ENCODE measurements at regions of chr6 and their contacts with region 1.

Region 1: DNA sequence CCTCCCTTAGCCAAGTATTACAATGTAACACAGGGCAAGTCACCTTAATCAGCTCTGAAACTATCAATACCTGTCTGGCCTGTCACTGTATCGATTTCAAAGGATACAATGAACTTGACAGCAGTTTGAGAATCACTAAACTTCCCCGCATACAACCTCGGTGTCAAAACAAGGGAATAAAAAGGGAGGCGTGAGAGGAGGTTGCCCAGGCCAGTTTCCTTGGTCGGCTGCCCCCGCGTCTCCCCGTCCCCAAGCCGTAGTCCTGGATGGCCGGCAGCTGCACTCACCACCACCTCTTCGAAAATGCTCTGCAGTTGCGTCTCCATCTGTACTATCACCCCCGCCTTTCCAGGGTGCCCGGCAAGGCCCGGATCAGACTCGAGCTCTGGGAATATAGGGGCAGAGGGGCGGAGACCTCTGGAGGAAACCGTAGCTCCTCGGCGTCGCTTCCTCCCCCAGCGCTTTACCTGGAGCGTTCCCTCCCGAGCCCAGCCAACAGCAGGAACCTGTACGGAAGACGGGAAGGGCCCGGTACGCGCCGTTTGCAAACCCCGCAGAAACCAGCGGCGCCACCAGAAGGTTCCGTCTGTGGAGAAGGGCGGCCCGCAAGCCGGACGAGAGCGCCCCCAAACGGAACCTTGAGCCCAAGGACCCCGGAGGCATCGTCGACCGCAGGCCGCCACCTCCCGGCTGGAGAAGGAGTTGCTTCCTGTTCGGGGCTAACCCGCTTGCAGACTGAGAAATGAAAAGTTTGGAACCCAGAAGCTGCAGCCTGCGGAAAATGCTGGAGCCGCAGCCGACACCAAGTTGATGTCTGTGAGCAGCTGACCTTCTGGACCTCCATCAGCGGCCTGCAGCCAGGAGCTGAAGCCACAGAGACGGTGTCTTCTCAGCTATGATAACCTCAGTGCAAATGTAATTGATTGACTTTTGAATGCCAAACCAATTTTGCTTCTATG is at the start of gene MED23:
- DNase-seq: peak; percentile 70
- H3K4me3 ChIP-seq: peak within 1 kb of the TSS; percentile 85
- CTCF ChIP-seq: peak; percentile 100

Region 2: DNA sequence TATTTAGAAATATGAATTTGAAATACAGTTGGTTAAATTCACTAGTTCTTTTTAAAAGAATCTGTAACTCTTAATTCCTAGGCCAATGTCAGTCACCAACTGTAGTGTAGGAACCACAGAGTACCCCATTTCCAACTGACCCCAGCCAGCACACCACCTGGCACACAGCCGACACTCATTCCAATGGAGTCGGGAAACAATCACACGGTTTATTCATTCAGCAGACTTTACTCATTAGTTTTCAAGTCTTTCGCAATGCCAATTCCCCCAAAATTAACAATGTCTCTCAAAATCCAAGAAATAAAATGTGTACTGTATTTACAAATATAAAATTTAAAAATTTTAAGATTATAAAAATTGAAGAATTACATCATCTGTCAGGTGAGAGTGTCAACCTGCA is 41.5 kb before region 1 on chr6:
- CTCF ChIA-PET with region 1: interaction called, 15 read pairs
- POLR2A ChIA-PET with region 1: no interaction called
- DNase-seq: no peak
- H3K4me3 ChIP-seq: no peak overlapping the region
- CTCF ChIP-seq: no peak

Region 3: GRCh38 chr6:131615275-131615674 is 12.7 kb before region 1 on chr6:
- CTCF ChIA-PET with region 1: interaction called, 52 read pairs
- POLR2A ChIA-PET with region 1: interaction called, 3 read pairs
- DNase-seq: no peak
- H3K4me3 ChIP-seq: no peak overlapping the region
- CTCF ChIP-seq: no peak

Region 4: DNA sequence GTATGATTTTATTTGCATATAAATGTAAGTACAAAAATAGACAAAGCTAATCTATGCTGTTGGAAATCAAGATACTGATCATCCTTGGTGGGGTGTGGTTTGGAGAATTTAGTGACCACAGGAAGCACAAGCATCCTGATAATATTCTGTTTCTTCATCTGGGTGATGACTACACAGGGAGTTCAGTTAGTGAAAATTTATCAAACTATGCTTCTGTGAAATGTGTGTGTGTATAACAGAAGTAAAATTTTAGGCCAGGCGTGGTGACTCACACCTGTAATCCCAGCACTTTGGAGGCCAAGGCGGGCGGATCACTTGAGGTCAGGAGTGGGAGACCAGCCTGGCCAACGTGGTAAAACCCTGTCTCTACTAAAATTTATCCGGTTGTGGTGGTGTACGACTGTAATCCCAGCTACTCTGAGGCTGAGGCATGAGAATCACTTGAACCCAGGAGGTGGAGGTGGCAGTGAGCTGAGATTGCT is 29.7 kb after region 1 on chr6:
- CTCF ChIA-PET with region 1: interaction called, 44 read pairs
- POLR2A ChIA-PET with region 1: no interaction called
- DNase-seq: peak; percentile 47
- H3K4me3 ChIP-seq: no peak overlapping the region
- CTCF ChIP-seq: no peak

Region 5: DNA sequence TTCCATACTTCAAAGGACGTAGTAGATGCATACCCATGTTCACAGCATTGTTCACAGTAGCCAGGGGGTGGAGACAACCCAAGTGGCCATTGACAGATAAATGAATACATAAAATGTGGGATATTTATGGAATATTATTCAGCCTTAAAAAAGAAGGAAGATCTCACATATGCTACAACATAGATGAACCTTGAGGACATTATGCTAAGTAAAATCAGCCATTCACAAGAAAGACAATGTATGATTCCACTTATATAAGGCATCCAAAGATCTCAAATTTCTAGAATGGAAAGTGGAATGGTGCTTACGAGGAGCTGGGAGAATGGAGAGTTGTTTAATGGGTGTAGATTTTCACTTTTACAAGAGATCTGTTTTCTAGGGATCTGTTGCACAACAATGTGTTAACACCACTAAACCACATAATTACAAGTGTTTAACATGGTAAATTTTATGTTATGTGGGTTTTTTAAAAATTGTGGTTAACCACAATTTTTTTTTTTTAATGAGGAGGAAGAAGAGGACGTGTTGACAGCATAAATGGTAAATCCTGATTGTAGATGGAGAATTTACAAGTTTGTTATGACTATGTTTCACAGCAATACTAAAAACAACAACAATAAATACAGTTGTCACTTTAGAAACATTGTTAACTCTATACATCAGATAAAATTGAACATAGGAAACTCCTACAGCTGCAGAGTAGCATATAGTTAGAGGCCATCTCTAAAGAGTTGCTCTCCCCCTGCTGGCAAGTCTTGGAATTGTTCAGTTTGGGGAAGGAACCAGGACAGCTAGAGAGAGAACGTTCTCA is 281.6 kb after region 1 on chr6:
- CTCF ChIA-PET with region 1: interaction called, 12 read pairs
- POLR2A ChIA-PET with region 1: no interaction called
- DNase-seq: no peak
- H3K4me3 ChIP-seq: no peak overlapping the region
- CTCF ChIP-seq: peak; percentile 83

Measured in AG04449 (cell line).